Heart right ventricle (tissue), 16 donors: ENCODE measurements at regions of chr13 and their contacts with region 1.

Region 1: GRCh38 chr13:94590744-94591143 is 5.2 kb downstream of the TGDS start:
- DNase-seq: no peak
- ATAC-seq: no peak
- H3K4me3 ChIP-seq: no peak overlapping the region
- H3K27ac ChIP-seq: no peak overlapping the region
- H3K4me1 ChIP-seq: peaks cover 4 to 29% (median 19%) of the 10 kb centered on the region in 9 donors
- H3K27me3 ChIP-seq: no peaks in the 10 kb centered on the region
- CTCF ChIP-seq: no peak

Region 2: DNA sequence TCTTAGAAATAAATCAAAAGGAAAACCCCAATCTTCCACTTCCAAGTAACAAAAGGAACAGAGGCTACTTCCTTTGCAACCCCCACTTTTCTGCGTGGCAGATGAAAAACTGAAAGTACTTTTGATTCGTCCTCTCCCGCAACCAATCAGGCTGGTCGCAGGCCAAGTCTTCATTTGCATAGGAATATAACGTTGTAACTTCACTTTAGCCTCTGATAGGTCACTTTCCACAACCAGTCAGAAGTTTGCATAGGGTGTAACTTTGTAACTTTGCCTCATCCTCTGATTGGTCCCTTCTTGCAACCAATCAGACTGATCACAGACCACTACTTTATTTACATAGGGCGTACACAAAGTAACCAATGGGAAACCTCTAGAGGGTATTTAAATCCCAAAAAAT is 32.0 kb before region 1 on chr13:
- intact Hi-C with region 1: loop called in 2 of 10 experiments (anchors 5 kb)
- DNase-seq: no peak
- ATAC-seq: no peak
- H3K4me3 ChIP-seq: no peak overlapping the region
- H3K27ac ChIP-seq: no peak overlapping the region
- H3K4me1 ChIP-seq: no peaks in the 10 kb centered on the region
- H3K27me3 ChIP-seq: no peaks in the 10 kb centered on the region
- CTCF ChIP-seq: no peak